ENCODE measurements at regions of chr3 and their contacts with region 1.

Region 1: DNA sequence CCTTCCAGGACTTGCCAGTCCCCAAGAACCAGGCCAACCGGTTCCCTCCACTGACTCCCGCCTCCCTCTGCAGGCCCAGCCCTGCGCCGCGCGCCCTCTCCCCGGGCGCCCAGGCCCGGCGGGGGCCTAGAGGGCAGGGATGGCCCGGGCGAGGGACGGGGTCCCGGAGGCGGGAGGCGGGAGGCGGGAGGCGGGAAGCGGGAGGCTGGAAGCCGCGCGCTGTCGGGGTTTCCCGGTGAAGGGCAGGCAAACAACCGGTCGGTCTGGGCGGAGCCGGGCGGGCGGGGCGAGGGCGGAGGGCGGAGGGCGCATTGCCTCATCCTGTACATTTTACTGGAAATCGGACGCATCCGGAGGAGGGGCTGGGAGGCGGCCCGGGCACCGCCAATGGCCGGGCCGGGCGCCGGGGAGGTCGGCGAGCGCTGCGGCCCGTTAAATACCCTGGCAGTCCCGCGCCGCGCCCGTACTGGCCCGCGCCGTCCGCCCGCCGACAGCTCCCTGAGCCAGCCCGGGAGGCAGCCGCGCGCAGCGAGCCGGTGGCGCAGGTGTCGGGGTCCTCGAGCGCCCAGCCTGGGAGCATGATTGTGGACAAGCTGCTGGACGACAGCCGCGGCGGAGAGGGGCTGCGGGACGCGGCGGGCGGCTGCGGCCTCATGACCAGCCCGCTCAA is at the start of gene NFKBIZ:
- DNase-seq: peak; percentile 81 to 94 (median 88)
- ATAC-seq: peak; percentile 88
- H3K4me3 ChIP-seq: peak within 1 kb of the TSS; percentile 98
- H3K4me3 Mint-ChIP-seq: peak within 1 kb of the TSS; percentile 90 to 100 (median 98)
- H3K27ac ChIP-seq: peak within 1 kb of the TSS; percentile 100
- H3K27ac Mint-ChIP-seq: peak within 1 kb of the TSS; percentile 98 to 100 (median 99)
- H3K4me1 ChIP-seq: peaks cover 20 to 27% of the 10 kb centered on the region in 2 donors
- H3K4me1 Mint-ChIP-seq: peaks cover 36 to 51% (median 42%) of the 10 kb centered on the region in 7 donors
- H3K27me3 ChIP-seq: no peaks in the 10 kb centered on the region
- H3K27me3 Mint-ChIP-seq: no peaks in the 10 kb centered on the region
- total RNA-seq, gene NFKBIZ: 108 to 913 (median 140) TPM

Region 2: GRCh38 chr3:101643861-101644613 is 205.1 kb before region 1 on chr3:
- CTCF ChIA-PET with region 1: no interaction called
- POLR2A ChIA-PET with region 1: no interaction called
- intact Hi-C with region 1: no loop called
- DNase-seq: peak in 7 of 9 donors; percentile 22 to 64 (median 50)
- ATAC-seq: peak; percentile 80
- H3K4me3 ChIP-seq: no peak overlapping the region
- H3K4me3 Mint-ChIP-seq: peak overlapping the region in 8 of 10 donors; percentile 7 to 43 (median 20)
- H3K27ac ChIP-seq: no peak overlapping the region
- H3K27ac Mint-ChIP-seq: peak overlapping the region; percentile 69 to 88 (median 77)
- H3K4me1 ChIP-seq: peaks cover 17 to 21% of the 10 kb centered on the region in 2 donors
- H3K4me1 Mint-ChIP-seq: peaks cover 15 to 33% (median 30%) of the 10 kb centered on the region in 7 donors
- H3K27me3 ChIP-seq: no peaks in the 10 kb centered on the region
- H3K27me3 Mint-ChIP-seq: no peaks in the 10 kb centered on the region

Region 3: DNA sequence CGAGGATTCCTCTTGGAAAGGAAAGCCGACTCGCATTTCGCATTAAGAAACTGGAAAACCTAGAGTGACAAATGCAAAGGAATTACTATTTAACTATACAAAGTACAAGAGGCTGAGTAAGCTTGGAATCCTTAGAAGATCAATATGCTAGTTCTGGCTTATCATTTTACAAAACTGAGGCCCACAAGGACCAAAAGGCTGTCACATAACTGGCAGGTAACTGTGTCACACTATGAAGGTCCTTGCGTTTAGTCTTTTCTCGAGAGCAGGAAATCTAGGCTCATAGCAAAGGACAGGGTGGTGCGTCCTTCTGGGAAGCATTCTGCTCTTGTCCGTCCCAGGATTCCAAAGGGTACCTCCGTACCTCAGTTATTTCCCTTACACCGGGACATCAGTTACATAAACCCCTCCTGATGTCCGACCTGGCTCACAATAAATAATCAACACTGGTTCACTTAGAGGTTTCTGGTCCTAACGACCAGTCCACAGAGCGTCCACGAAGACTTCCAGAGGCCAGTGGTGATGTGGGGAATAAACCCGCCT is 163.2 kb before region 1 on chr3:
- CTCF ChIA-PET with region 1: no interaction called
- POLR2A ChIA-PET with region 1: interaction called, 9 read pairs
- intact Hi-C with region 1: loop called in 1 of 2 experiments (anchors 2 kb)
- DNase-seq: peak in 2 of 9 donors; percentile 21 to 24
- ATAC-seq: peak; percentile 1
- H3K4me3 ChIP-seq: peak overlapping the region; percentile 72
- H3K4me3 Mint-ChIP-seq: peak overlapping the region; percentile 90 to 100 (median 98)
- H3K27ac ChIP-seq: peak overlapping the region; percentile 92
- H3K27ac Mint-ChIP-seq: peak overlapping the region; percentile 94 to 100 (median 99)
- H3K4me1 ChIP-seq: peaks cover 24 to 25% of the 10 kb centered on the region in 2 donors
- H3K4me1 Mint-ChIP-seq: peaks cover 20 to 58% (median 41%) of the 10 kb centered on the region in 7 donors
- H3K27me3 ChIP-seq: no peaks in the 10 kb centered on the region
- H3K27me3 Mint-ChIP-seq: no peaks in the 10 kb centered on the region

Region 4: DNA sequence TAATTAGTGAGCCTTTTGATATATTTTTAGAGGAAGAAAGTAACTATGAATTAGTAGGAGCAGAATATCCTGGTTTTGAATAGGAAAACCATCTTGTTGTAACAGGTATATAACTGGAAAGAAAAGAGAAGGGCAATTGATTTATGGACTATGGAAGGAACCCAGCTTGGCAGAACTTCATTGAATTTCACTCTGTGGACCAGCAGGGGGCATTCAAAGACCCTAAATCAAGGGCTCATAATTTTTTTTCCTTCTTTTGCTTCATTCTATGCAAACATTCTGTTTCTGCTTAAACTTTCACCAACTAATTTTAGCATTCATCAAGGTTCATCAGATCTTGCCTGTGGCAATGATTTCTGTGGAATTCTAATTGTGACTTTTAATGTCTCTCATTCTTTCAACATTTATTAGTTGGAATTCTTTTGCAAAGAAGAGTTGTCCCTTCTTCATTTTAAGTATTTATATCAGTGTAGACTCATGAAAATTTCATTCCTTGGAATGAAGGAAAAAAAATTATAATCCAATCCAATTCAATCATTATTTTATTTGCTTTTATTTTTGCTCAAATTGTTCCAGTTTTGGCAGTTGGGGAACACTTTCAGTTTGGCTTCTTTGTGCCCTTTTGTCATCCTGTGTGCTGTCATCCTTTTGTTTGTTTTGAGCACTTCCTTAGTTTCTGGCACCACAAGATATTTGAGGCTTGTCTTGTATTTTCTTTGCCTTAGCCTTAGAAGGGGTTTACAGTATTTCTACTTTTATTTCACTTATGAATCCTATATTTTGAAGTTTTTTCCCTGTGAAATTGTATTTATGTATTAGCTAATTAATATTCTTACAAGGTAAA is 39.8 kb before region 1 on chr3:
- CTCF ChIA-PET with region 1: interaction called, 7 read pairs
- POLR2A ChIA-PET with region 1: interaction called, 19 read pairs
- intact Hi-C with region 1: loop called (anchors 1 kb)
- DNase-seq: peak in 7 of 9 donors; percentile 31 to 67 (median 57)
- ATAC-seq: peak; percentile 88
- H3K4me3 ChIP-seq: no peak overlapping the region
- H3K4me3 Mint-ChIP-seq: peak overlapping the region in 8 of 10 donors; percentile 23 to 66 (median 60)
- H3K27ac ChIP-seq: peak overlapping the region; percentile 34
- H3K27ac Mint-ChIP-seq: peak overlapping the region; percentile 51 to 93 (median 87)
- H3K4me1 ChIP-seq: peaks cover 0 to 27% of the 10 kb centered on the region in 2 donors
- H3K4me1 Mint-ChIP-seq: peaks cover 11 to 62% (median 54%) of the 10 kb centered on the region in 7 donors
- H3K27me3 ChIP-seq: no peaks in the 10 kb centered on the region
- H3K27me3 Mint-ChIP-seq: no peaks in the 10 kb centered on the region

Region 5: DNA sequence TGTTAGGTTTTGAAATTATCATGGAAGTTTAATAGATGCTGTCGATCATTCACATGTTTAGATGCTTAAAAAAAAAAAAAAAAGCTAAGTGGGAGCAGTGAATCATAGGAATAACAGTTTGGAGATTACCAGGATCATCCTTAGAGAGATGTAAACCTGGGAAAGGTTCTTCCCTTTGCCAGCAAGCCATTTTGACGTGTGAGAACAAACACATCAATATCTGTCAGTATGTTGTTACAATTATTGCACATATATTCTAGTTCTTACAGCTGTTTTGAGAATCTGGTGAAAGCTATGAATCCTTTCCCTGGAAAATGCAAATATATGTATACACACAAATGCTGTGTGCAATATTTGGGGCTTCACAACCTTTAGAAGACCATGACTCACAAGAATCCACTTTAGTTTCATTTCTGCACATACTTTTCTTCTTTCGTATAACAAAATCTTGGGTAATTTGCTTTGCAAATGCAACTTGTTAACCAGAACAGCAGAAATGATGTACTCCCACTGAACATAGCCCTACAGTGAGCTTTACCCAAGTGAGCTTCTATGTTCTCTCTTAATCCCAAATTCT is 12.1 kb after region 1 on chr3:
- CTCF ChIA-PET with region 1: no interaction called
- POLR2A ChIA-PET with region 1: interaction called, 6 read pairs
- intact Hi-C with region 1: loop called in 1 of 2 experiments (anchors 1 kb)
- DNase-seq: peak in 1 of 9 donors; percentile 14
- ATAC-seq: peak; percentile 16
- H3K4me3 ChIP-seq: no peak overlapping the region
- H3K4me3 Mint-ChIP-seq: peak overlapping the region in 1 of 10 donors; percentile 30
- H3K27ac ChIP-seq: no peak overlapping the region
- H3K27ac Mint-ChIP-seq: peak overlapping the region in 8 of 9 donors; percentile 5 to 67 (median 36)
- H3K4me1 ChIP-seq: peaks cover 0 to 13% of the 10 kb centered on the region in 2 donors
- H3K4me1 Mint-ChIP-seq: peaks cover 8 to 50% (median 36%) of the 10 kb centered on the region in 7 donors
- H3K27me3 ChIP-seq: no peaks in the 10 kb centered on the region
- H3K27me3 Mint-ChIP-seq: peaks cover 0 to 2% (median 0%) of the 10 kb centered on the region in 5 donors

Region 6: DNA sequence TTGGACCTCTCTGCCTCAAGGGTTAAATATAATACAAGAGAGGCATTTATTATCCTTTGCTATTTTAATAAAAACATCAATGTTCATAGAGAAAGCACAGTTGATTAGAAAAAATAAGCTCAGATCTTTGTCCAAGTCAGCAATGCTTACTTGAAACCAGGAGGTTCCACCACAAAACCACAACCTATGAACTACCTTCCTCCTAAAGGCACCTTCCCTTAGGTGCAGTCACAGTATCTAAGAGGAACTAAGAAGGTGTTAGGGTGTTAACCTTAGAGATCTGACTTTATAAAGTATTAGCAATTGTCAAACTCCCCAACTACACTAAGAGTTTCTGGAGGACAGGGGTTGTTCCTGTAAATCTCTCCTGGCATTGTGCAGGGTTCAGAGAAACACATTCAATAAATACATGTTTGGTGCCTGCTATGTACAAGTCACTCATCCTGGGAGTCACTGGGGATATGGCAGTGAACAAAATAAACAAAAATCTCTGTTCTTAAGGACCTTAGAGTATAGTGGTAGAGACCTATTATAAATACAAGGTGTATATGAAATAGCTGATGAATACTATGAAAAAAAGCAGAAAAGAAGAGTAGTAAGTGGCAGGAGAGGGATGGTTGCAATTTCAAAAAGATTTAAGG is 208.7 kb after region 1 on chr3:
- CTCF ChIA-PET with region 1: no interaction called
- POLR2A ChIA-PET with region 1: interaction called, 9 read pairs
- intact Hi-C with region 1: loop called in 1 of 2 experiments (anchors 1 kb)
- DNase-seq: peak in 7 of 9 donors; percentile 57 to 82 (median 72)
- ATAC-seq: peak; percentile 96
- H3K4me3 ChIP-seq: peak overlapping the region; percentile 5
- H3K4me3 Mint-ChIP-seq: peak overlapping the region; percentile 23 to 74 (median 44)
- H3K27ac ChIP-seq: peak overlapping the region; percentile 44
- H3K27ac Mint-ChIP-seq: peak overlapping the region; percentile 68 to 91 (median 84)
- H3K4me1 ChIP-seq: peaks cover 27 to 30% of the 10 kb centered on the region in 2 donors
- H3K4me1 Mint-ChIP-seq: peaks cover 26 to 56% (median 46%) of the 10 kb centered on the region in 7 donors
- H3K27me3 ChIP-seq: no peaks in the 10 kb centered on the region
- H3K27me3 Mint-ChIP-seq: no peaks in the 10 kb centered on the region

Region 7: GRCh38 chr3:102113411-102114041 is 264.3 kb after region 1 on chr3:
- CTCF ChIA-PET with region 1: no interaction called
- POLR2A ChIA-PET with region 1: interaction called, 17 read pairs
- intact Hi-C with region 1: loop called (anchors 1 kb)
- DNase-seq: peak in 1 of 9 donors; percentile 16
- ATAC-seq: no peak
- H3K4me3 ChIP-seq: no peak overlapping the region
- H3K4me3 Mint-ChIP-seq: peak overlapping the region in 9 of 10 donors; percentile 6 to 63 (median 26)
- H3K27ac ChIP-seq: peak overlapping the region; percentile 69
- H3K27ac Mint-ChIP-seq: peak overlapping the region; percentile 88 to 99 (median 93)
- H3K4me1 ChIP-seq: peaks cover 0 to 29% of the 10 kb centered on the region in 2 donors
- H3K4me1 Mint-ChIP-seq: peaks cover 9 to 61% (median 44%) of the 10 kb centered on the region in 7 donors
- H3K27me3 ChIP-seq: no peaks in the 10 kb centered on the region
- H3K27me3 Mint-ChIP-seq: no peaks in the 10 kb centered on the region